ENCODE measurements at regions of chr2 and their contacts with region 1.

Region 1: GRCh38 chr2:130776550-130776949 is 21.2 kb downstream of the AMER3 start:
- DNase-seq: no peak
- ATAC-seq: peak; percentile 55 to 60

Region 2: GRCh38 chr2:130135692-130136541 is 640.6 kb before region 1 on chr2:
- intact Hi-C with region 1: no loop called
- DNase-seq: no peak
- ATAC-seq: no peak

Region 3: DNA sequence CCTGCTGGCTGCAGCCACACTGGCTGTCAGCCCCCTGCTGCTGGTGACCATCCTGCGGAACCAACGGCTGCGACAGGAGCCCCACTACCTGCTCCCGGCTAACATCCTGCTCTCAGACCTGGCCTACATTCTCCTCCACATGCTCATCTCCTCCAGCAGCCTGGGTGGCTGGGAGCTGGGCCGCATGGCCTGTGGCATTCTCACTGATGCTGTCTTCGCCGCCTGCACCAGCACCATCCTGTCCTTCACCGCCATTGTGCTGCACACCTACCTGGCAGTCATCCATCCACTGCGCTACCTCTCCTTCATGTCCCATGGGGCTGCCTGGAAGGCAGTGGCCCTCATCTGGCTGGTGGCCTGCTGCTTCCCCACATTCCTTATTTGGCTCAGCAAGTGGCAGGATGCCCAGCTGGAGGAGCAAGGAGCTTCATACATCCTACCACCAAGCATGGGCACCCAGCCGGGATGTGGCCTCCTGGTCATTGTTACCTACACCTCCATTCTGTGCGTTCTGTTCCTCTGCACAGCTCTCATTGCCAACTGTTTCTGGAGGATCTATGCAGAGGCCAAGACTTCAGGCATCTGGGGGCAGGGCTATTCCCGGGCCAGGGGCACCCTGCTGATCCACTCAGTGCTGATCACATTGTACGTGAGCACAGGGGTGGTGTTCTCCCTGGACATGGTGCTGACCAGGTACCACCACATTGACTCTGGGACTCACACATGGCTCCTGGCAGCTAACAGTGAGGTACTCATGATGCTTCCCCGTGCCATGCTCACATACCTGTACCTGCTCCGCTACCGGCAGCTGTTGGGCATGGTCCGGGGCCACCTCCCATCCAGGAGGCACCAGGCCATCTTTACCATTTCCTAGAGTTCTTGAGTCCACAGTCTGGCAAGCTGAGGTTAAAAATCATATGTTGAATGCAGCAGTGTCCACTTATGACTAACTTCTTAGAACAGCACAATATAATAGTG is 46.9 kb before region 1 on chr2:
- intact Hi-C with region 1: loop called in 1 of 2 experiments (anchors 5 kb)
- DNase-seq: no peak
- ATAC-seq: no peak

Measured in left cardiac atrium (tissue), 4 donors.